Activated CD4-positive, alpha-beta T cell treated with anti-CD3 and anti-CD28 coated beads for 36 hours (primary cell): ENCODE measurements at regions of chr9 and their contacts with region 1.

Region 1: GRCh38 chr9:84261082-84261746 is 79.3 kb downstream of the SLC28A3 start:
- DNase-seq: peak; percentile 77
- ATAC-seq: peak; percentile 82
- H3K4me3 Mint-ChIP-seq: no peak overlapping the region
- H3K27ac Mint-ChIP-seq: no peak overlapping the region
- H3K4me1 Mint-ChIP-seq: peaks cover 6% of the 10 kb centered on the region
- H3K27me3 Mint-ChIP-seq: peaks cover 8% of the 10 kb centered on the region

Region 2: GRCh38 chr9:83583151-83584014 is 677.8 kb before region 1 on chr9:
- CTCF ChIA-PET with region 1: no interaction called
- POLR2A ChIA-PET with region 1: no interaction called
- intact Hi-C with region 1: no loop called
- DNase-seq: peak; percentile 44
- ATAC-seq: peak; percentile 36
- H3K4me3 Mint-ChIP-seq: no peak overlapping the region
- H3K27ac Mint-ChIP-seq: no peak overlapping the region
- H3K4me1 Mint-ChIP-seq: peaks cover 9% of the 10 kb centered on the region
- H3K27me3 Mint-ChIP-seq: no peaks in the 10 kb centered on the region

Region 3: DNA sequence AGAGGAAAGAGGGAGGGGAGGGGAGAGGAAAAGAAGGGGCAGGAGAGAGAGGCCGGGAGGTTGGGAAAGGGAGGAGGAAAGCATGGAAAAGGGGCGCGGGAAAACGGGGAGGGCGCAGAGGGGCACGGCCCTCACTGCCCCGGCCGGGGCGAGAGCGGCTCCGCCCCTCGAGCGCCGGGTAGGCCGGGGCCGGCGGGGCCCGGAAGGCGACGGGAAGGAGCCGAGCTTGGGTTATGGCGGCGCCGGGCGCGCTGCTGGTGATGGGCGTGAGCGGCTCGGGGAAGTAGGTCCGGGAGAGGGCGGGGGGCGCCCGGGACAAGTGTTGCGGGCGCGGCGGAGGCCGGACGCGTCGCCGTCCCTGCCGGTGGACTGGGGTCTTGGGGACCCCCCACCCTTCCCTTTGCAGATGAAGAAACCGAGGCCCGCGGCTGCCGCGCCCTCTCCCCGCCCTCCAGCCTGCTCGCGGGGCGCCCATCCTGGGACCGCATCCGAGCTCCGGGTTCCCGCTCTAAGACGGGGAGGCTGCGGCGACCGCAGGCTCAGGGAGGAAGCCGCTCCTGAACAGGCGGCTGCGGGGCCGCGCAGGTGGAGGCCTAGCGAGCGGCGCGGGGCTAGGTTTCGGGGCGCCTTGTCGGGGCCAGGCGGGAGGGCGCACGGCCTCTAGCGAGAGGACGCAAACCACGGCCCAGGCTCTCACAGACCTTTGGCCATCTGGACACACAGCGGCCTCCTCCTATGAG is 638.1 kb before region 1 on chr9 and contains the start of gene IDNK:
- CTCF ChIA-PET with region 1: no interaction called
- POLR2A ChIA-PET with region 1: interaction called, 10 read pairs
- intact Hi-C with region 1: no loop called
- DNase-seq: peak; percentile 77
- ATAC-seq: peak; percentile 89
- H3K4me3 Mint-ChIP-seq: peak within 1 kb of the TSS; percentile 80
- H3K27ac Mint-ChIP-seq: peak within 1 kb of the TSS; percentile 98
- H3K4me1 Mint-ChIP-seq: peaks cover 23% of the 10 kb centered on the region
- H3K27me3 Mint-ChIP-seq: no peaks in the 10 kb centered on the region
- total RNA-seq, gene IDNK: 4.6 to 4.7 TPM

Region 4: DNA sequence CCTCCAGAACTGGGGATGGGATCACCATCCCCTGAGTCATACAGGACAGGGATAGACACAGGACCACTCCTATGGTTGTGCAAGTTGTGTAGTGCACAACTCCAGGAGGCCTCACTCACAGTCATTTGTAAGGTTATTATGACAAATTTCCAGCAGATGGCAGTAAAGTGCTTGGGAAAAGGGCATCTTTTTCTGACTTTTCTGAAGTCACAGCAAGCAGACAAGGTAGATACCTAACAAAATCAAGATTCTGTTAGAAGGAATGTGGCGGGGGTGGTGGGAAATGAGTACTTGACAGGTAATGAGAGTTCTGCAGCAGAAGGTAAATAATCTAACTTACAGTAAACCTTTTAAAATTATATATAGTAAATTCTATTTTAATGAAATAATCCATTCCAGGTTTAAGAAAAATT is 323.3 kb before region 1 on chr9:
- CTCF ChIA-PET with region 1: interaction called, 17 read pairs
- POLR2A ChIA-PET with region 1: no interaction called
- intact Hi-C with region 1: loop called (anchors 1 kb)
- DNase-seq: peak; percentile 23
- ATAC-seq: peak; percentile 63
- H3K4me3 Mint-ChIP-seq: no peak overlapping the region
- H3K27ac Mint-ChIP-seq: no peak overlapping the region
- H3K4me1 Mint-ChIP-seq: no peaks in the 10 kb centered on the region
- H3K27me3 Mint-ChIP-seq: no peaks in the 10 kb centered on the region

Region 5: DNA sequence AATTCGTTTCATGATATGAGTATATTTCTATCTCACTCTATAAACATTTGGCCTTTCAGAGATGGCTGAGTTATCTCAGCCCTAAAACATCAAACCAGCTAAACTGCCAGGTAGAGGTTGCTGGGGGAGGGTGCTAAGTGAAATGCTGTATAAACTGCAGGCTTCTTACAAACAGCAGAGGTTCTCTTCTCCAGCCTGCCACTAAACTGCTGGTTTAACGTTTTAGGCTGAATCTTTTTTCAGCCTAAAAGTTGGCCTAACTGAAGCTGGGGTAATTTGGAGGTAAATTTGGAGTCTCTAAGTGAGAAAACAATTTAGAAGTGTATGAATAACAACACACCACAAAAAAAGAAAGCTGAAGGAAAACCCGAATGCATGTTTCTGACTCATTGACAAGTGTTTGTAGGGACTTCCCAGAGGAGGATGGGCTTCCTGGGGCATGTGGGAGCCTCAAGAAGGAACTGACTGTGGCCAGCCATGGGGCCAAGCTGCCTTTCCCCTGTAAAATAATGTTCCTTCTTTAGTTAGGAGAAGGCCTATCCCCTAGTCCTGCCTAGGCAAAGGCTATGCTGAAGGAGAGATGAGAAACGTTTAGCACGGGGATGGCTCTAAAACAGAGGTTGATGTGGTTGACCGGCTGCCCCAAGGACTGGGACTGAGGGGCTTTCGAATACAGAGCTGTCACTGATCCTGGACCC is 35.1 kb after region 1 on chr9:
- CTCF ChIA-PET with region 1: interaction called, 11 read pairs
- POLR2A ChIA-PET with region 1: no interaction called
- intact Hi-C with region 1: loop called in 1 of 2 experiments (anchors 1 kb)
- DNase-seq: peak; percentile 79
- ATAC-seq: peak; percentile 82
- H3K4me3 Mint-ChIP-seq: peak overlapping the region; percentile 46
- H3K27ac Mint-ChIP-seq: peak overlapping the region; percentile 98
- H3K4me1 Mint-ChIP-seq: peaks cover 60% of the 10 kb centered on the region
- H3K27me3 Mint-ChIP-seq: no peaks in the 10 kb centered on the region